Mammary epithelial cell (primary cell): ENCODE measurements at regions of chr1 and their contacts with region 1.

Region 1: GRCh38 chr1:12113433-12114339 is 50.6 kb downstream of the TNFRSF8 start:
- DNase-seq: peak; percentile 24
- H3K4me3 ChIP-seq: no peak overlapping the region
- H3K27ac ChIP-seq: no peak overlapping the region
- H3K4me1 ChIP-seq: peaks cover 8% of the 10 kb centered on the region
- H3K27me3 ChIP-seq: no peaks in the 10 kb centered on the region
- CTCF ChIP-seq: no peak

Region 2: GRCh38 chr1:12143631-12144155 is 30.0 kb after region 1 on chr1:
- CTCF ChIA-PET with region 1: no interaction called
- dilution Hi-C with region 1: loop called (anchors 5 kb)
- in situ Hi-C with region 1: no loop called
- intact Hi-C with region 1: no loop called
- DNase-seq: peak; percentile 98
- H3K4me3 ChIP-seq: peak overlapping the region in 1 of 3 experiments; percentile 14
- H3K27ac ChIP-seq: no peak overlapping the region
- H3K4me1 ChIP-seq: peaks cover 13% of the 10 kb centered on the region
- H3K27me3 ChIP-seq: peaks cover 2% of the 10 kb centered on the region
- CTCF ChIP-seq: no peak

Region 3: DNA sequence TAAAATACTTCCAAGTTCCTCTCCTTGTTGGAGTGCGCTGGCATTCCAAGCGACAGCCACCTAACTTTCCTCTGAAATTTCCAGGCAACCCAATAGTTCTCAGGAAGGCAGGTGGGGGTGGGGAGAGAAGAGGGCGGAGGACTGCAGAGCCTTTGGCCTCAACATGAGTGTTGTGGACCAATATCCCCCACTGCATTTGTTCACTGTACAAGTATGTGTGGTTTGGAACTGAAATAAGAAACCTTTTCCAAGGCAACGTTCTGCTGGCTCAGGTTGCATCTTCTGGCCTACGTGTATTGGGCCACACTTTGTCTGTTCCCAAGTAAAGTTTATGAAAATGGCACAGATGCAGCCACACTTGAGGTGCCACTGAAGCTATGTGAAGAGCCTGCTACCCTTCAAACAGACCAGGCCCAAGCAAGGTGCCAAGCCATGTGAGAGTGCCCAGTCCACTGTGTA is 350.9 kb after region 1 on chr1:
- CTCF ChIA-PET with region 1: no interaction called
- dilution Hi-C with region 1: no loop called
- in situ Hi-C with region 1: no loop called
- intact Hi-C with region 1: loop called (anchors 5 kb)
- DNase-seq: peak; percentile 65
- H3K4me3 ChIP-seq: no peak overlapping the region
- H3K27ac ChIP-seq: no peak overlapping the region
- H3K4me1 ChIP-seq: peaks cover 10% of the 10 kb centered on the region
- H3K27me3 ChIP-seq: no peaks in the 10 kb centered on the region
- CTCF ChIP-seq: no peak